Testis (tissue), 5 donors: ENCODE measurements at regions of chr10 and their contacts with region 1.

Region 1: DNA sequence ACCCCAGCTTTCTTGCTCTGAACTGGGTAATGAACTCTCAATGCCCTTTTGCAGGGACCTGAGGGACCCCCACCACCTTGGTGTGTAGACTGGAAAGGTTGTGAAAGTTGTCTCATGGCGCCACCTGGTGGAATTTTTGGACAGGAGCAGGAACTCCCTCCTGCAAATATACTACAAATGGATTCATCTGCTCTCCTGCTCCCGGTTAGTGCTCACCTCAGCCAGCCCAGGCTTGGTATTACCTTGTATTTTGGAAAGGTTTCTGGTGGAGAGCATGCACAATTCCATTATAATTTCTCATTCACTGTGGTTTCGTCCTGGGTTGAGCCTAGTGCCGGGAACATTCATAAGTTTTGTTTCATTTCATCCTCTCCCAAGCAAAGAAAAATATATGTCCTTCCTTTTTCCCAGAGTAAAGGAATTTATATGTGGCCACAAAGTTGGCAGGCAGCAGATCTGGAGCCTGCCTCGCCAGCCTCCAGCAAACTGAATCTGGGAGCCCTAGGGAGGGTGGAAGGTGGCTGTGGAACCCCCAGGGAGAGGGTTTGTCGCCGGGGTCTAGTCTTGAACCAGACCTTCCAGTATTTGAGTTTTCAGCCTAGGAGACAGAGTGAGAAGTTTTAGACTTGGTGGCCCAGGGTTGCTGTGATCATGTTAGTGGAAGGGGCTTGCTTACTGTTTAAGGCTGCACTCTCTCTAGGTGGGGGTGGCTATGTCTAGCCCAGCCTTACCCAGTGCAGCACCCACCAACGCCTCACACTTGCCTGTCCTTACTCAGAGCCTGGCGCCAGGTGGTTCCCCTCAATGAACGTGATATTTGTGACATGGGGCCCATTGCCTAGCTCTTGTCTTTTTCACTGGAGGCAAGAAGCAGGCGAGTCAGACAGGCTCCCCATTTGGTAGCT is 9.5 kb downstream of the FAM241B start:
- DNase-seq: peak; percentile 81
- H3K4me3 ChIP-seq: no peak overlapping the region
- H3K27ac ChIP-seq: no peak overlapping the region
- H3K4me1 ChIP-seq: no peaks in the 10 kb centered on the region
- H3K27me3 ChIP-seq: no peaks in the 10 kb centered on the region
- CTCF ChIP-seq: peak; percentile 78 to 92 (median 79)
- POLR2A ChIP-seq: no peak

Region 2: GRCh38 chr10:69439813-69440506 is 199.6 kb before region 1 on chr10:
- intact Hi-C with region 1: loop called (anchors 10 kb)
- DNase-seq: no peak
- H3K4me3 ChIP-seq: no peak overlapping the region
- H3K27ac ChIP-seq: no peak overlapping the region
- H3K4me1 ChIP-seq: no peaks in the 10 kb centered on the region
- H3K27me3 ChIP-seq: no peaks in the 10 kb centered on the region
- CTCF ChIP-seq: no peak
- POLR2A ChIP-seq: no peak

Region 3: GRCh38 chr10:69703766-69704638 is 64.5 kb after region 1 on chr10:
- intact Hi-C with region 1: no loop called
- DNase-seq: no peak
- H3K4me3 ChIP-seq: no peak overlapping the region
- H3K27ac ChIP-seq: no peak overlapping the region
- H3K4me1 ChIP-seq: no peaks in the 10 kb centered on the region
- H3K27me3 ChIP-seq: no peaks in the 10 kb centered on the region
- CTCF ChIP-seq: no peak
- POLR2A ChIP-seq: no peak

Region 4: DNA sequence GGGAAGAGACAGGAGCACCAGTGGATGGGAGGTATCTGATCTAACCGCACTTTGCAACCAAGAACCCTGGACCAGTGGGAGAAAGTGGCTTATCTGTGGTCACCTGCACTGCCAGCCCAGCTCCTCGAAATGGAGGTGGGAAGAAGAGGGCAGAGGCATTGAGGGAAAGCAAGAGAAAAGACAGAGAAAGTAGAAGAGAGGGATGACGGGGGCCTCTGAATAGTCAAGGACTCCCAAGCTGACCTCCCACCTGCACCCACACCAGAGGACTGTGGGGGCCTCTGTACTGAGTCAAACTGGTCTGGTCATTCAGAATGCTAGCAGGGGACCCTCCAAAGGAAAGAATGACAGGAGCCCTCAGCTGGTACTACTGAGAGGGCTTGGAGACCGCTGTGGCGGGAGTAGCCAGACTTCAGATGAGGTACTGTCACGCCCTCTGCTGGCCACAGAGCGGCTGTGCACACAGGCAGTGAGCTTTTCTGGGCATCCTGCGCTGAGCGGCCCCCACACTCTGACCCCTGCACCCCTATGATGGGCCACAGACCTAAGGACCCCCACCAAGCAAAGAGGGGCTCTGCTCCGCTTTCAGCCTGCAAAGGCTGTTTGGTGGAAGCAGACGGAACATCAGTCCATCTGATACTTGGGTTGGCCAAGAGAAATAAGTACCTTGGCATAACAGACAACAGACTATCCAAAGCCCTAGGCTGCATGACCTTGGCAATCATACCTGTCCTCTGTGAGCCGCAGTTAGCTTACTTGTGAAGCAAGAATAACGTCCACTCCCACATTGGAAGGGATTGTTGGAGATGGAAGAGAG is 275.1 kb after region 1 on chr10:
- intact Hi-C with region 1: loop called (anchors 10 kb)
- DNase-seq: peak; percentile 89
- H3K4me3 ChIP-seq: no peak overlapping the region
- H3K27ac ChIP-seq: no peak overlapping the region
- H3K4me1 ChIP-seq: peaks cover 30% of the 10 kb centered on the region
- H3K27me3 ChIP-seq: no peaks in the 10 kb centered on the region
- CTCF ChIP-seq: peak; percentile 84 to 93 (median 93)
- POLR2A ChIP-seq: no peak